ENCODE measurements at regions of chr16 and their contacts with region 1.

Region 1: GRCh38 chr16:88803264-88803987 is at the start of gene CDT1:
- DNase-seq: peak; percentile 84
- H3K4me3 Mint-ChIP-seq: peak within 1 kb of the TSS; percentile 85
- H3K27ac Mint-ChIP-seq: peak within 1 kb of the TSS; percentile 84
- H3K4me1 Mint-ChIP-seq: peaks cover 15% of the 10 kb centered on the region
- H3K27me3 Mint-ChIP-seq: no peaks in the 10 kb centered on the region
- total RNA-seq, gene CDT1: 95.4 and 97.3 TPM in 2 replicates

Region 2: GRCh38 chr16:88737298-88738150 is 65.9 kb before region 1 on chr16:
- intact Hi-C with region 1: loop called (anchors 1 kb)
- DNase-seq: peak; percentile 49
- H3K4me3 Mint-ChIP-seq: no peak overlapping the region
- H3K27ac Mint-ChIP-seq: no peak overlapping the region
- H3K4me1 Mint-ChIP-seq: no peaks in the 10 kb centered on the region
- H3K27me3 Mint-ChIP-seq: no peaks in the 10 kb centered on the region

Region 3: GRCh38 chr16:88747588-88748301 is 55.7 kb before region 1 on chr16:
- intact Hi-C with region 1: no loop called
- DNase-seq: no peak
- H3K4me3 Mint-ChIP-seq: no peak overlapping the region
- H3K27ac Mint-ChIP-seq: no peak overlapping the region
- H3K4me1 Mint-ChIP-seq: peaks cover 10% of the 10 kb centered on the region
- H3K27me3 Mint-ChIP-seq: no peaks in the 10 kb centered on the region

Measured in activated T-helper 1 cell treated with anti-CD3 and anti-CD28 coated beads, Interleukin-12 subunit alpha, Interleukin-12 subunit beta, Interleukin-2, Interleukin-4 antibody, amounts not matched to agents 30 ng/mL and 10 ng/mL and 1 ng/mL, durations not matched to agents 14 hours and 24 hours and 36 hours (primary cell).